Spleen (tissue), 13 donors: ENCODE measurements at regions of chr3 and their contacts with region 1.

Region 1: DNA sequence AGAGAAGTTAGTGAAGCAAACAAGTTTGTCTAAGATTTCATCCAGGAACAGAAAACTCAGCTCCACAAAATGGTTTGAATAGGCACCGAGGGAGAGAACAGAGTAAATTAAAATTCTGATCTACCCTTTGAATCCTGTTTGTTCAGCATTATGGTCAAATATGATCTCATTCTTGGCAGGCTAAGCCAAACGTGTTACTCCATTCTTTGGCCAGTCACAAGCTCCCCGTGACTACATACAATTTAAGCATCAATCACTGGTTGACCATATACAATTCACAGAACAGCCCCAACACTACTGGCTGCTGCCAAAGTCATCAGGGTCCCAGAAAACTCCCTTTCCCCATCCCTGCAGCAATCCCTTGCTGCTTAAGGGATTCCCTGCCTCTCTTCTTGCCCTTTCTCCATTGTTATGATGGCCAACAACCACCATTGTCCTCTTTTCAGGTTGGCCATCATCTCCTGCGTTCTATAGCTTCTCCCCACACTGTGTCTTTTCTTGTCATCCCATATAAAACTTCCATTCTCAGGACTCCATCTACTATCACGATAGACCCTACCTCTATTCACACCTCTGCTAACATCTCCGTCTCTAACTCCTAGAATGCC is 46.3 kb downstream of the GOLIM4 start:
- DNase-seq: no peak
- H3K4me3 ChIP-seq: no peak overlapping the region
- H3K27ac ChIP-seq: no peak overlapping the region
- H3K4me1 ChIP-seq: peaks cover 0 to 16% (median 7%) of the 10 kb centered on the region in 6 donors
- H3K27me3 ChIP-seq: no peaks in the 10 kb centered on the region
- CTCF ChIP-seq: no peak
- POLR2A ChIP-seq: no peak

Region 2: DNA sequence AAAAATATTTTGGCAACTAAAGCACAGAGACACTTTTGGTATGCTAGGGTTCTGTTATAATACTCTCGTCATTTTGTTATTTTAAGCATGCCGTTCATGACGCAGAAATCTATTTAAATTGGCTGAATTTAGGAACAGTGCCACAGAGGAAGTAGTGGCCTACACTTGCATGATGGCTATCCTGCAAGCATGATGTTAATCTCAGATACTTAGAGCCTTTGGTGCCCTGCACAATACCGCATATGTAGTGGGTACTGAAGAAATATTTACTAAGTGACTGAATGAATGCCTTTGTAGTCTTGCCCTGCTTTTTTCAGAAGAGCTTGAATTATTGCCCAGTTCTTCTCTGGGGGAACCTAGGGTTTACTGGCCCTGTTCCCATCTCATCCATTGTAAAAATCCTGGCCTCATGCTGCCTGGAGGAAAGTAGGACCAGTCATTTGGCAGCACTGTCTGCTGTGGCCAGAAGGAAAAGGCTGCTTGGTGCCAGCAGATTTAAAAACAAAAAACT is 235.0 kb before region 1 on chr3:
- intact Hi-C with region 1: no loop called
- DNase-seq: no peak
- H3K4me3 ChIP-seq: no peak overlapping the region
- H3K27ac ChIP-seq: no peak overlapping the region
- H3K4me1 ChIP-seq: no peaks in the 10 kb centered on the region
- H3K27me3 ChIP-seq: no peaks in the 10 kb centered on the region
- CTCF ChIP-seq: no peak
- POLR2A ChIP-seq: no peak

Region 3: DNA sequence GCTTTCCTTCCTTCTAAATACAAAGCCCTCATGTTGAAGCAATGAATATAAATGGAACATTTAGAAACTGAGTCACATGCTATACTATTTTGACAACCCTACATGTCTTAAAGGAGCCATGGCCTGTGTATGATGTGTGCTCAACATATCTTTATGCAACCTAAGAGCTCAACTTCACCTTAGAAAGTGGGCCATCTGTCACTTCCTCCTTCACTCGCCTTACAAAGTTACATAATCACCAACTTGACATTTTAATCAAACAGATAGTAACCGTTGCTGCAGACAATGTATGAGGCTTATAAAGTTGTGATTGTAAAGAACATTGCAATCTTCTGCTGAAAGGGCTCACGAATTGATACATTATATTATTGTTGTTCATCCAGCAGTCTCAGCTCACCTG is 150.4 kb before region 1 on chr3:
- intact Hi-C with region 1: no loop called
- DNase-seq: no peak
- H3K4me3 ChIP-seq: no peak overlapping the region
- H3K27ac ChIP-seq: no peak overlapping the region
- H3K4me1 ChIP-seq: no peaks in the 10 kb centered on the region
- H3K27me3 ChIP-seq: no peaks in the 10 kb centered on the region
- CTCF ChIP-seq: no peak
- POLR2A ChIP-seq: no peak

Region 4: DNA sequence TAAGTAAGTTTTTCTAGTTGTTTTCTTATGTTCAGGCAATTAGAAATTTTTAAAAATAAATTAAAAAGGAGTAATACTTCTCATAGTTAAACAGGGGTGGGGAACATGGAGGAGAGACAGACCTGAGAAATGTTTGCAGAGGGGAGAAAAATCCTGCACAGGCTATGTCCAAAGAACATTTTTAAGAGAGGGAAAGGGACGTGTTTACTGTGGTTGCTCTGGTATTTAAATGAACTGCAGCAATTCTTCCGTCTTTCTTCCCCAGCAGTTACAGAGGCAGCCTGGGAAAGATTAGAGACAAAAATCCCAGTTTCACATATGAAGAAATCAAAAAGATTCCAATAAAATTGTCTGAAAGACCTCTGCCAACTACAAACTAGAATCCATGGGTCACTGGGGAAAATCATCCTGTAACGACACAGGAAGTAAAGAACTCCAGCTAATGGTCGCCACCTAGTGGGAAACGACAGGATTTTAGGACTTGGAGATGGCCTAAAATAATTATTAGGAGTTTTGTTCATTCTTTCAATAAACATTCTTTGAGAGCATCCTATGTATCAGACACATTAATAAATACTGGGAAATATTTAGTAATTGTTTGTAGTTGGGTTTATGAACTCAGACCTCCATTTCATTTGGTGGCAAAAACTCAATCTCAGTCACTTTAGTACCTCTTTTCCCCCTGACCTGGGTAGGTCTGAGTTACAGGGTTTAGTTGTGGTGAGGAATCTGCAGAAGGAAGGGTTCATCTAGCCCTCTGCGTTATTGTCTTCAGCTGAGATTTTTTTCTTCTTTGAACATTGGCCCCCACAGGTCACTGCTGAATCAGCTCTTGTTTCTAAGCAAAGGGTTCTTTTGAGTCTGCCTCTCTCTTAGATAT is 116.2 kb after region 1 on chr3:
- intact Hi-C with region 1: loop called (anchors 2 kb)
- DNase-seq: no peak
- H3K4me3 ChIP-seq: peak overlapping the region in 1 of 8 donors; percentile 17
- H3K27ac ChIP-seq: no peak overlapping the region
- H3K4me1 ChIP-seq: peaks cover 0 to 9% (median 2%) of the 10 kb centered on the region in 6 donors
- H3K27me3 ChIP-seq: no peaks in the 10 kb centered on the region
- CTCF ChIP-seq: peak; percentile 24 to 74 (median 69)
- POLR2A ChIP-seq: no peak

Region 5: GRCh38 chr3:168197162-168197561 is 147.7 kb after region 1 on chr3:
- intact Hi-C with region 1: no loop called
- DNase-seq: no peak
- H3K4me3 ChIP-seq: no peak overlapping the region
- H3K27ac ChIP-seq: no peak overlapping the region
- H3K4me1 ChIP-seq: no peaks in the 10 kb centered on the region
- H3K27me3 ChIP-seq: peaks cover 0 to 11% (median 0%) of the 10 kb centered on the region in 7 donors
- CTCF ChIP-seq: no peak
- POLR2A ChIP-seq: no peak